Gastrocnemius medialis (tissue), 4 donors: ENCODE measurements at regions of chr7 and their contacts with region 1.

Region 1: DNA sequence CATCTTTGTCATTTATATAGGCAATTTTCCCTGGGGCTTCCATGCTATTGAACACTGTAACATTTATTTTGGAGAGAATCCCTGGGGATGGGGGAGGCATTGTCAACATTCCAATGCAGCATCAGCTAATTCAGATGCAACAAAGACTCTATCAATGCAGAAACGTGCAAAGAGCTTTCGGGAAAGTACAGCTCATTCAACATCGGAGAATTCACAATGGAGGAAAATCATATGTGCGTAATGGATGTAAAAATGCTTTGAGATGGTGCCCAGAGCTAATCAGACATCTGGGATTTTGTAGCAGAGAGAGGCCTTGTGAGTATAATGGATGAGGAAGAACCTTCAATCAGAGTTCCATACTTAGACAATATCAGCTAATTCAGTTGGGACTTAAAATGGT is 28.3 kb upstream of the FIS1 start:
- DNase-seq: no peak
- ATAC-seq: no peak
- H3K4me3 ChIP-seq: no peak overlapping the region
- H3K27ac ChIP-seq: no peak overlapping the region
- H3K4me1 ChIP-seq: no peaks in the 10 kb centered on the region
- H3K27me3 ChIP-seq: peaks cover 10 to 29% (median 29%) of the 10 kb centered on the region in 3 donors
- CTCF ChIP-seq: no peak
- POLR2A ChIP-seq: no peak

Region 2: GRCh38 chr7:101197991-101198390 is 75.2 kb before region 1 on chr7:
- in situ Hi-C with region 1: loop called in 1 of 4 experiments (anchors 10 kb)
- intact Hi-C with region 1: no loop called
- DNase-seq: no peak
- ATAC-seq: no peak
- H3K4me3 ChIP-seq: no peak overlapping the region
- H3K27ac ChIP-seq: no peak overlapping the region
- H3K4me1 ChIP-seq: peaks cover 0 to 7% of the 10 kb centered on the region in 2 donors
- H3K27me3 ChIP-seq: peaks cover 39 to 46% (median 41%) of the 10 kb centered on the region in 3 donors
- CTCF ChIP-seq: no peak
- POLR2A ChIP-seq: no peak

Region 3: DNA sequence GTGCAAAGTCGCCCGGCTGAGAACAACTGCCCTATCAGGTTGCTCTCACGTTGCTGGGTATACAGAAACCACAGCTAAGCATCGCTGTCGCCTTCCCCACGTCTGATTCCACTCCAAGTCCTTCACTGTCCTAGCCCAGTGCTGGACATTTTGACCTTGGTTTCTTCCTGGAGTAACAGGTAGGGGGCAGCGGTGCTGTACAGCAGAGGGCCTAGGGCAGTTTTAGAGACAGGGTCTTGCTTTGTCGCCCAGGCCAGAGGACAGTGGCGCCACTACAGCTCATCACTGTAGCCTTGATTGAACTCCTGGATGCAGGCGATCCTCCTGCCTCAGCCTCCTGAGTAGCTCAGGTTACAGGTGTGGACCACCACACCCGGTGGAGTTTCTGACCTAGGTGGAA is 38.2 kb before region 1 on chr7:
- in situ Hi-C with region 1: no loop called
- intact Hi-C with region 1: no loop called
- DNase-seq: no peak
- ATAC-seq: no peak
- H3K4me3 ChIP-seq: no peak overlapping the region
- H3K27ac ChIP-seq: no peak overlapping the region
- H3K4me1 ChIP-seq: peaks cover 19 to 22% of the 10 kb centered on the region in 2 donors
- H3K27me3 ChIP-seq: no peaks in the 10 kb centered on the region
- CTCF ChIP-seq: peak in 2 of 5 experiments; percentile 26 to 35
- POLR2A ChIP-seq: no peak